Sigmoid colon (tissue), 7 donors: ENCODE measurements at regions of chr5 and their contacts with region 1.

Region 1: GRCh38 chr5:79857714-79858409 is 133.2 kb downstream of the MTX3 start:
- DNase-seq: peak; percentile 84
- H3K4me3 ChIP-seq: no peak overlapping the region
- H3K27ac ChIP-seq: no peak overlapping the region
- H3K4me1 ChIP-seq: peaks cover 0 to 22% (median 13%) of the 10 kb centered on the region in 4 donors
- H3K27me3 ChIP-seq: no peaks in the 10 kb centered on the region
- CTCF ChIP-seq: peak; percentile 78 to 97 (median 92)
- EP300 ChIP-seq: no peak
- POLR2A ChIP-seq: no peak

Region 2: DNA sequence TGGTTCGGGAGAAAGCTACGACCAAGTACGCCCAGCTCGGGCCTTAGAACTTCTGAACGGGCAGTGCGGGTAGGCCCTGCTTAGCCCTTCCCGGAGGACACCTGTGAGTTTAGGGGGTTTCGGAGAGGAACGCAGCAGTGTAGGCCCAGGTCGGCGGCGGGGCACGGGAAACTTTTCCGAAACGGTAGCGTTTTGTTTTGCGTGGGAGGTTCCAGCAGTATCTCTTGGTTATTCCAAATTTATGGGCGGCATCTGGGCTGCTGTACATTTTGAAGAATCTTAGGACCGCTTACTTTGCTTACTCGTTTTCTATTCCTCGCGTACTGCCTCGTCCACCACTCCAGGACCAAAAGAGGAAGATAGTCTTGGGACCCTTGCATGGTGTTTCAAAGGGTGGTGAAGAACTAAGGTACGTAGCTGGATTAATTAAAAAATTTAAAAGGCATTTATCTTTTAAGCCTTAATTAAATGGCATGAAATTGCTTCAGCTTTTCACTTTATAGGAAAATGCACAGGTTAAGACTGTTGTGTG is 245.1 kb before region 1 on chr5:
- intact Hi-C with region 1: loop called (anchors 5 kb)
- DNase-seq: no peak
- H3K4me3 ChIP-seq: peak overlapping the region; percentile 59 to 80 (median 68)
- H3K27ac ChIP-seq: peak overlapping the region; percentile 80 to 94 (median 90)
- H3K4me1 ChIP-seq: peaks cover 0 to 28% (median 19%) of the 10 kb centered on the region in 4 donors
- H3K27me3 ChIP-seq: no peaks in the 10 kb centered on the region
- CTCF ChIP-seq: no peak
- EP300 ChIP-seq: no peak
- POLR2A ChIP-seq: no peak

Region 3: DNA sequence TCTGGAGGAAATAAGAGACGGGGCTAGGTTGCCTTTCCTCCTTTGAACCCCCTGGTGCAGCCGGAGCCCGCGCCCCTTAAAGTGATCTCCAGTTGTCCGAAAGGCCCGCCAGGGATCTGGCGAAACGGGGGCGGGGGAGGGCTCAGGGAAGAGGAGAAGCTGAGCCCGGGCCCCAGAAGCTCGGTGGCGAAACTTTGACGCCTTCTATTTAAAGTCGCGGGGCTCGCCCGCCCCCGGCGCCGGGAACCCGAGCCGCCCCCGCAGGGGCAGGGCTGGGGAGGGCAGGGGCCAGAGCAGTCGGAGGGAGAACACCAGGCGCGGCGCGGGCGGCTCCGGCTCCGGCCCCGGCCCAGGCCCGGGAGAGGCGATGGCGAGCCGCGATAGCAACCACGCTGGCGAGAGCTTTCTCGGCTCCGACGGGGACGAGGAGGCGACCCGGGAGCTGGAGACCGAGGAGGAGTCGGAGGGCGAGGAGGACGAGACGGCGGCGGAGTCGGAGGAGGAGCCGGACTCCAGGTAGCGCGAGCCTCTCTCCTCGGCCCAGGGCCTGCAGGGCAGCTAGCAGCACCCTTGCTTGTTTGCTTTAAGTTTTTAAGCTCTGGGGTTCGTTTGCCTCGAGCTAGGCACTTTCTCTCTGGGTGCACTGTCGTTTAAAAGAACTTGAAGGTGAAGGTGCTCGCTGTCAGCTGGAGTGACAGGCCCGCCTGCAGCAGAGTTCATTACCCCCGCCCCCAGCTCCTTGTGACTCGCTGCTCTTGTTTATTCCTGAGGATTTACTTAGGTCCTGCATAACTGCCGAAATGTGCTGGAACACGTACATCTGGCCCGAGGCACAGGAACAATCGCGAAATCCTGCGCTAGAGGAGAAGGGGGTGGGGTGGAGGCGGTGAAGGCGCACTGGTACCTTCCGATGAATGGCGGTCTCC is 168.1 kb before region 1 on chr5 and contains the start of gene CMYA5:
- intact Hi-C with region 1: loop called (anchors 5 kb)
- DNase-seq: peak; percentile 83
- H3K4me3 ChIP-seq: peak within 1 kb of the TSS; percentile 41 to 63 (median 54)
- H3K27ac ChIP-seq: peak within 1 kb of the TSS; percentile 61 to 79 (median 66)
- H3K4me1 ChIP-seq: peaks cover 0 to 12% (median 7%) of the 10 kb centered on the region in 4 donors
- H3K27me3 ChIP-seq: no peaks in the 10 kb centered on the region
- CTCF ChIP-seq: no peak
- EP300 ChIP-seq: no peak
- POLR2A ChIP-seq: no peak
- total RNA-seq, gene CMYA5: 5.2 to 21.0 (median 6.0) TPM

Region 4: DNA sequence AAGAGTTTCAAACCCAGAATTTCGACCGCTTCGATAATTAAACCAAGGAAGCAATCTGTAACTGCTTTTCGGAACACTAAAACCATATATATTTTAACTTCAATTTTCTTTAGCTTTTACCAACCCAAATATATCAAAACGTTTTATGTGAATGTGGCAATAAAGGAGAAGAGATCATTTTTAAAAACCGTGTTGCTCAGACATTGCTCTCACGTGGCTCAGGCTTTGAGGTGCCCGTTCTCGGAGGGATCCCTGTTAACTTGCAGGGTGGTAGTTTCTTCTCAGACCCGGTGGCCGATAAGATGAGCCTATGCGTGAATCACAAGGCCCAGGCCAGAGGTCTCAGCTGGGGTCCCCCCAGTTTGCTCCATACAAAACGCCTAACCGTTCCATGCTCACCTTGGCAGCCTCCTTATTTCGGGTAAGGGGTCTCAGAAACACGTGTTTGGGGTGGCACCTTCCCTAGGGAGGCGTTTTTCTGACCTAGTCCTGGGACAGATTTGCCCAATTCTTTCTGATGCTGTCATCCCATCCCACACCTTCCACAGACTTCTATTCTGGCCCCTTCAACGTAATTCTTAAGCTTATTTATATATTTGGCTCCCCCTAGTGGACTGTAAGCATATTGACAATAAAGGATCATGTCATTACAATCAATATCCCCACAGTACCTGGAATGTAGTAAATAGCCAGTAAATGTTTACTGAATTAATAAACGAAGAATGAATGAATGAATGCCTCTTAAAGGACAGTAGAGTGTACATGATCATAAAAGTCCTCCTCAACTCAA is 225.4 kb after region 1 on chr5:
- intact Hi-C with region 1: loop called (anchors 2 kb)
- DNase-seq: peak; percentile 70
- H3K4me3 ChIP-seq: peak overlapping the region; percentile 2 to 39 (median 32)
- H3K27ac ChIP-seq: peak overlapping the region; percentile 62 to 76 (median 74)
- H3K4me1 ChIP-seq: peaks cover 0 to 14% (median 7%) of the 10 kb centered on the region in 4 donors
- H3K27me3 ChIP-seq: no peaks in the 10 kb centered on the region
- CTCF ChIP-seq: peak; percentile 63 to 76 (median 68)
- EP300 ChIP-seq: no peak
- POLR2A ChIP-seq: no peak